HEK293 (cell line): ENCODE measurements at regions of chr17 and their contacts with region 1.

Region 1: DNA sequence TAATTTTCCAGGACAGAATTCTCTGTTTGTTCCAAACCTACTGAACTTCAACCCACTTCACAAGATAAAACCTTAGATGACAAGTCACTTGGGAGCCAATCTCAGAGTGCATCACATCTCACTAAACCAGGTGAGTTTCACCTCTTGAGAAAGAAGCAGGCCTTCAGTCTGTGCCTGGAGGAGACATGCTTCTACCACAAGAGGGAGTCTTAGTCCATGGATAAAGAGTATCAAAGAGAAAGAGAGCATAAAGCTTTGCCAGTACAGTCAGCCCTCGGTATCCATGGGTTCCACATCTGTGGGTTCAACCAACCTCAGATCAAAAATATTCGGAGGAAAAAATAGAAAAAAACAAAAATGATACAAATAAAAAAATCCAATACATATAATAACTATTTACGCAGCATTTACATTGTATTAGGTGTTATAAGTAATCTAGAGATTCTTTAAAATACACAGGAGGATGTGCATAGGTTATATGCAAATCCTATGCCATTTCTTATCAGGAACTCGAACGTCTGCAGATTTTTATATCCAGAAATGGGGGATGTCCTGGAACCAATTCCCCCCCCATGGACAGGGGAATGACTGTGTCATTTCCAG is 37.7 kb downstream of the DUSP14 start:
- H3K4me3 ChIP-seq: no peak overlapping the region
- H3K27ac ChIP-seq: no peak overlapping the region
- H3K4me1 ChIP-seq: no peaks in the 10 kb centered on the region
- CTCF ChIP-seq: peak; percentile 80

Region 2: GRCh38 chr17:37430051-37430627 is 97.2 kb before region 1 on chr17:
- CTCF ChIA-PET with region 1: no interaction called
- POLR2A ChIA-PET with region 1: no interaction called
- H3K4me3 ChIP-seq: no peak overlapping the region
- H3K27ac ChIP-seq: peak overlapping the region; percentile 1; the same call in 1 of the 2 replicates
- H3K4me1 ChIP-seq: no peaks in the 10 kb centered on the region
- CTCF ChIP-seq: no peak

Region 3: DNA sequence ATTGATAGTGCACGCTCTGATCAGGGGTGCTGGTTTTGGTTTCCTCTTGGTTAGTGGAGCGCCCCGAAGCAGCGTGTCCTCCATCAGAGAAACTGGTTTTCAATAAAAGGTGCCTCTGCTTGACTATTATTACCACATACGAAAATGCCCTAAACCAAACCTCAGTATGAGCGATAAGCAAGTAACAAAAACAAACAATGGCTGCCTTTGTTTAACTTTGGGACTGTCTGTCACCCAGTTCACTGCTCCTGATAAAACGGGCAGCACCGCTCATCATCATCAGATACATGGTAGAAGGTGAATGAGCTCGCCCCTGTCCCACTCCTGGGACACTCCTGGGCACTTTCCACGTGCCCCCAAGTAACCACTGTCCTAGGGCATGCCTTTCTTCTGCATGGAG is 13.6 kb before region 1 on chr17:
- CTCF ChIA-PET with region 1: interaction called, 11 read pairs
- POLR2A ChIA-PET with region 1: no interaction called
- H3K4me3 ChIP-seq: no peak overlapping the region
- H3K27ac ChIP-seq: 0 out of 2 replicates have a peak overlapping the region, but pooled peaks have one; percentile 7
- H3K4me1 ChIP-seq: peaks cover 7% of the 10 kb centered on the region
- CTCF ChIP-seq: no peak

Region 4: DNA sequence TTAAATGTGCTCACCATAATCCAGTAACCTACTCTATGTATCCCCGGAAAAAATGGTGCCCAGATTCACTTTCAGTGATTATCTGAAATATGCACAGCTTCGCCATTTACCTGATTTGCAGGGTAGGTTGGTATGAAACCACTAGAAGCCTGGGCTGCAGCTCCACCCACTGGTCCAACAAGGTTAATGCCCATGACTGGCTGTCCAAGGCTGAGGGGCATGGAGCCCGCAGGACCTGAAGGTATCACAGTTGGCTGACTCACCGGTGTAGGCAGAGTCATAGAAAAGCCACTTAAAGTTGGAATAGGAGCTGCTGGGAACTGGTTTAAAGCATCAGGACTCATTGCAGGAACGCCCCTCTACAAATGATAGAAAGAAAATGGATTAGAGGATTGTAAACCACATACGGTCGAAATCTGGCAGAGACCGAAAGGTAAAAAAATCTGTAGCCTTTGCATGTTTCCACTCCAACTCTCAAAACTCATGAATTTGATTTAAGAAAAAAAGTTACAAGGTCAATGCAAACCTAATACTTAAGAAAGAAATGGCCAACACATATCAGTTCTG is 43.3 kb after region 1 on chr17:
- CTCF ChIA-PET with region 1: interaction called, 48 read pairs
- POLR2A ChIA-PET with region 1: no interaction called
- H3K4me3 ChIP-seq: no peak overlapping the region
- H3K27ac ChIP-seq: no peak overlapping the region
- H3K4me1 ChIP-seq: peaks cover 10% of the 10 kb centered on the region
- CTCF ChIP-seq: peak; percentile 82

Region 5: DNA sequence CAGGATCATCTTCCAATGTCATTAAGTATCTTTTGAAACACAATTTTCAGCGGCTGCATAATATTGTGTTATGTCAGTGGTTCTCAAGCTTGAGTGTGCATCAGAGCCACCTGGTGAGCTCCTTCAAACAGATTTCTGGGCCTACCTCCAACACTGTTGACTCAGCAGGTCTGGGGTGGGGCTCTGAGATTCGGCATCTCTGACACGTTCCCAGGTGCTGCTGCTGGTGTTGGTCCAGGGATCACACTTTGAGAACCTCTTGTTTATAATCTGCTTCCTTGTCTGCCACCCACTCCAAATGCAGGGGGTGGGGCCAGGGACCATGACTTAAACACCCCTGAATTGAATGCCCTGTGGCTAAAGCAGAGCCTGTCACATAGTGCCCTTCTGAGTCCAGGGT is 291.3 kb after region 1 on chr17:
- CTCF ChIA-PET with region 1: interaction called, 19 read pairs
- POLR2A ChIA-PET with region 1: no interaction called
- H3K4me3 ChIP-seq: no peak overlapping the region
- H3K27ac ChIP-seq: no peak overlapping the region
- H3K4me1 ChIP-seq: no peaks in the 10 kb centered on the region
- CTCF ChIP-seq: no peak